Activated B cell treated with CpG ODN at 0.5 μM for 24 hours (primary cell): ENCODE measurements at regions of chr21 and their contacts with region 1.

Region 1: GRCh38 chr21:36246080-36246631 is 73.8 kb upstream of the MORC3 start:
- DNase-seq: no peak
- ATAC-seq: no peak
- H3K4me3 Mint-ChIP-seq: no peak overlapping the region
- H3K27ac Mint-ChIP-seq: no peak overlapping the region
- H3K4me1 Mint-ChIP-seq: peaks cover 10% of the 10 kb centered on the region
- H3K27me3 Mint-ChIP-seq: no peaks in the 10 kb centered on the region
- CTCF ChIP-seq: no peak

Region 2: DNA sequence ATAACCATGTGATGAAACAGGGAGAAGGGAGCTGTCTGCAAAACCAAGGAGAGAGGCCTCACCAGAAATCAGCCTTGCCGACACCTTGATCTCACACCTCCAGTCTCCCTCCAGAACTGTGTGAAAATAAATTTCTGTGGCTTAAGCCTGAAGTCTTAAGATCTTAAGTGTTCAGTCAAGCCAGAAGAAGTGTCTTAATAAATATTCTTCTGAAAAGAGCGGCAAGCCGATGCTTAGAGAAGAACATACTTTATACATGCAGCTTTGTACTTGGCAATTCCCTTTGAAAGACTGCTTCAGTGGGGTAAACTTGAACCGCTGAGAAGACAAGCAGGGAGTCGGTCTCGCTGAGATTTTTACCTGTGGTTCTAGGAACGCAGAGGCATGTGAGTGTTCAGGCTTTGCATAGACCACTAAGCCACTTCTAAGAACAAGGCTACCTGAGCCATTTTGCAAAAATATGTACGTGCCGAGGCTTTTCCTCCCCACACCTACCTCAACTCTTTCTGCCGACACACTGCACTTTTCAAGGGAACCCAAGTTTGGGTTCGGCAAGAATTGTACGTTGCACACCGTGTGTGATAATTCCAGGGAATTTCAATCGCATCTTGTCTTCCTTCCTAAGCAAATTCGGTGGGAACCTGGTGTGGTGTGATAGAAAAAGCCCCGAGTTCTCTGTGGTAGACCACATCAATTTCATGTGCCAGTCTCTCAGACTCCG is 1200.5 kb before region 1 on chr21:
- CTCF ChIA-PET with region 1: no interaction called
- POLR2A ChIA-PET with region 1: interaction called, 16 read pairs
- intact Hi-C with region 1: no loop called
- DNase-seq: no peak
- ATAC-seq: no peak
- H3K4me3 Mint-ChIP-seq: peak overlapping the region; percentile 91
- H3K27ac Mint-ChIP-seq: peak overlapping the region; percentile 97
- H3K4me1 Mint-ChIP-seq: peaks cover 98% of the 10 kb centered on the region
- H3K27me3 Mint-ChIP-seq: no peaks in the 10 kb centered on the region
- CTCF ChIP-seq: no peak

Region 3: DNA sequence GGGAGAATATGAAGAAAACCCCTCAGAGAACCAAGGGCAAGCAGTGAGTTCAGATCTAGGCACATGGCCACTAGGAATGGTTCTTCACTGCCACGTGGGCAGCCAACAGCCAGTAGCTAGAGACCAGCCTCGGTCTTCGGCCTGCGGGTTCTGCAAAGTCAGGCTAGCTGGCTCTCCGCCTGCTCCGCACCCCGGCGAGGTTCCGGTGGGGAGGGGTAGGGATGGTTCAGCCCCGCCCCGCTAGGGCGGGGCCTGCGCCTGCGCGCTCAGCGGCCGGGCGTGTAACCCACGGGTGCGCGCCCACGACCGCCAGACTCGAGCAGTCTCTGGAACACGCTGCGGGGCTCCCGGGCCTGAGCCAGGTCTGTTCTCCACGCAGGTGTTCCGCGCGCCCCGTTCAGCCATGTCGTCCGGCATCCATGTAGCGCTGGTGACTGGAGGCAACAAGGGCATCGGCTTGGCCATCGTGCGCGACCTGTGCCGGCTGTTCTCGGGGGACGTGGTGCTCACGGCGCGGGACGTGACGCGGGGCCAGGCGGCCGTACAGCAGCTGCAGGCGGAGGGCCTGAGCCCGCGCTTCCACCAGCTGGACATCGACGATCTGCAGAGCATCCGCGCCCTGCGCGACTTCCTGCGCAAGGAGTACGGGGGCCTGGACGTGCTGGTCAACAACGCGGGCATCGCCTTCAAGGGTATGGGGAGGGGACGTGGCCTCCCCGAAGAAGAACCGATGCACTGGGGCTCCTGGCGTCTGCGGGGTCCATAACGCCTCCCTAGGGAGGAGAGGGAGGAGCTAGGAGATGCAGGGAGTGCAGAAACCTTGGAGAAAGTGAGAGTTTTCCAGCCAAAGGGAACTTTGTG is 176.2 kb before region 1 on chr21 and contains the start of gene CBR1:
- CTCF ChIA-PET with region 1: no interaction called
- POLR2A ChIA-PET with region 1: interaction called, 11 read pairs
- intact Hi-C with region 1: no loop called
- DNase-seq: peak; percentile 86
- ATAC-seq: peak; percentile 99
- H3K4me3 Mint-ChIP-seq: peak within 1 kb of the TSS; percentile 90
- H3K27ac Mint-ChIP-seq: peak within 1 kb of the TSS; percentile 87
- H3K4me1 Mint-ChIP-seq: peaks cover 31% of the 10 kb centered on the region
- H3K27me3 Mint-ChIP-seq: no peaks in the 10 kb centered on the region
- CTCF ChIP-seq: no peak
- total RNA-seq, gene CBR1: 17.5 and 20.3 TPM in 2 replicates

Region 4: GRCh38 chr21:36288651-36289243 is 42.6 kb after region 1 on chr21:
- CTCF ChIA-PET with region 1: no interaction called
- POLR2A ChIA-PET with region 1: interaction called, 10 read pairs
- intact Hi-C with region 1: no loop called
- DNase-seq: no peak
- ATAC-seq: peak; percentile 51
- H3K4me3 Mint-ChIP-seq: peak overlapping the region; percentile 62
- H3K27ac Mint-ChIP-seq: peak overlapping the region; percentile 91
- H3K4me1 Mint-ChIP-seq: peaks cover 21% of the 10 kb centered on the region
- H3K27me3 Mint-ChIP-seq: no peaks in the 10 kb centered on the region
- CTCF ChIP-seq: no peak

Region 5: GRCh38 chr21:36437745-36438128 is 191.6 kb after region 1 on chr21:
- CTCF ChIA-PET with region 1: no interaction called
- POLR2A ChIA-PET with region 1: no interaction called
- intact Hi-C with region 1: no loop called
- DNase-seq: no peak
- ATAC-seq: no peak
- H3K4me3 Mint-ChIP-seq: no peak overlapping the region
- H3K27ac Mint-ChIP-seq: no peak overlapping the region
- H3K4me1 Mint-ChIP-seq: no peaks in the 10 kb centered on the region
- H3K27me3 Mint-ChIP-seq: peaks cover 13% of the 10 kb centered on the region
- CTCF ChIP-seq: no peak